Activated CD8-positive, alpha-beta T cell treated with anti-CD3 and anti-CD28 coated beads for 36 hours (primary cell): ENCODE measurements at regions of chr10 and their contacts with region 1.

Region 1: GRCh38 chr10:73159038-73159648 is 8.7 kb downstream of the ECD start:
- DNase-seq: peak; percentile 76
- ATAC-seq: no peak
- H3K4me3 Mint-ChIP-seq: no peak overlapping the region
- H3K27ac Mint-ChIP-seq: peak overlapping the region; percentile 63
- H3K4me1 Mint-ChIP-seq: peaks cover 38% of the 10 kb centered on the region
- H3K27me3 Mint-ChIP-seq: no peaks in the 10 kb centered on the region
- CTCF ChIP-seq: peak; percentile 94

Region 2: GRCh38 chr10:73076360-73077183 is 82.6 kb before region 1 on chr10:
- CTCF ChIA-PET with region 1: interaction called, 13 read pairs
- POLR2A ChIA-PET with region 1: interaction called, 3 read pairs
- intact Hi-C with region 1: no loop called
- DNase-seq: no peak
- ATAC-seq: no peak
- H3K4me3 Mint-ChIP-seq: no peak overlapping the region
- H3K27ac Mint-ChIP-seq: peak overlapping the region; percentile 46
- H3K4me1 Mint-ChIP-seq: peaks cover 16% of the 10 kb centered on the region
- H3K27me3 Mint-ChIP-seq: no peaks in the 10 kb centered on the region
- CTCF ChIP-seq: no peak

Region 3: DNA sequence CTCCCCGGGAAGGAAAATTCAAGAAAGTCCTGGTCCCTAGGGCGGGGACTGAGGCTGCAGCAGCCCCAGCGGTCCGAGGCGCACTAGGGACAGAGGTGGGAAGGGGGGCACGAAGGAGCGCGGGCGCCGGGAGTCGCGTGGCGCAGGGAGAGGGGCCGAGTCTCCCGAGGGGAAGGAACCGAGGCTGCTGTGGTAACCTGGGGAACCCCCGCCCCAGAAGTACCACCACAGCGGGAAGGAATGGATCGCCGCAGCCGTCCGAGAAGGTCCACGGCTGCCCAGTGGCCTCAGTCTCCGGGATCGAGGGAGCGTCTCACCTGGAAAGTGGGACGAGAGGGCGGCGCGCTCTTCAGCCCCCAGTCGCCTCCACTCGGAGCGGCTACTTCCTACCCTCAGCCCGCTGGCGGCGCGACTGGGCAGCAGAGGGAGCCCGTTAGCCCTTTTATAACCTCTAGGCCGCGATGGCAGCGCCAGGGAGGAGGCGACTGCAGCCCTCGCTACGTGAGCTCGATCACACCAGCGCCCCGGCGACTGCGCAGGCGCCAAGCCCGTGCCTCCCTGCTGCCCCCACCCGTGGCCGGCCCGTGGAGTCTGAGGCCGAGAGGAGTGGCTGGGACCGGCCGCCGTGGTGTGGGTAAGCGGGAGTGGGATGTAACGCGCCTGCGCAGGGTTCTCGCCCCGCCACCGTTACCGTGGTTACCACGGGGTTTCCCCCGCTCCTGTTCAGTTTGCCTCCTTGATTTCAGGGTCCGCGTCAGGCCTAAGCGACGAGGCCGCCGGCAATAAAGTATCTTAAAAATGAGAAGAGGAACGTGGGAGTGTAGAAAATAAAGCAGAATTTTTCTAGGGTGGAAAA is 62.5 kb before region 1 on chr10 and contains the start of gene P4HA1:
- CTCF ChIA-PET with region 1: interaction called, 60 read pairs
- POLR2A ChIA-PET with region 1: interaction called, 4 read pairs
- intact Hi-C with region 1: no loop called
- DNase-seq: peak; percentile 99
- ATAC-seq: peak; percentile 93
- H3K4me3 Mint-ChIP-seq: peak within 1 kb of the TSS; percentile 95
- H3K27ac Mint-ChIP-seq: peak within 1 kb of the TSS; percentile 98
- H3K4me1 Mint-ChIP-seq: peaks cover 31% of the 10 kb centered on the region
- H3K27me3 Mint-ChIP-seq: no peaks in the 10 kb centered on the region
- CTCF ChIP-seq: peak; percentile 62
- total RNA-seq, gene P4HA1: 72.2 to 72.3 TPM

Region 4: DNA sequence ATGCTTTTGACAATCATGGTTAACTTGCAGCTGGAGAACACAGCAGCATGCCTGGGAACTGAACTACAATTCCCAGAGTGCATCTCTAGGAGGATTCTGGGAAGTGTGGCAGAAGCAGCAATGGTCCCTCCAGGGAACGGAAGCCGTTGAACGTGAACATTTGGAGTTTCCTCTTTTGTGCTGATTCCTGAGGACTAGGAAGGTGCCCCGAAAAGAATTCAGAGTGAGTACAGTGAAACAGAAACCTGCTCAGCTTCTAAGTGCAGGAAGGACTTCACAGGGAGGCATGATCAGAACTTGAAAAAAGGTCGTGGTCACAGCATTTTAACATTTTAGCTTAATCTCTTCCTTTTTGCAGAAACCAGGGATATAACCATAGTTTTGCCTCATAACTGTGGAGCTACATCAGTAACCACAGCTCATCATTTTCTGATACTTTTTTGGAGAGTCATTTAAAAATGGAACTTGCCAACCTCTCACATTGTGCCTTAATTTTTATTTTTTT is 48.7 kb before region 1 on chr10 and contains the start of gene NUDT13:
- CTCF ChIA-PET with region 1: interaction called, 10 read pairs
- POLR2A ChIA-PET with region 1: interaction called, 3 read pairs
- intact Hi-C with region 1: no loop called
- DNase-seq: peak; percentile 55
- ATAC-seq: peak; percentile 86
- H3K4me3 Mint-ChIP-seq: peak within 1 kb of the TSS; percentile 89
- H3K27ac Mint-ChIP-seq: peak within 1 kb of the TSS; percentile 91
- H3K4me1 Mint-ChIP-seq: peaks cover 10% of the 10 kb centered on the region
- H3K27me3 Mint-ChIP-seq: no peaks in the 10 kb centered on the region
- CTCF ChIP-seq: no peak
- total RNA-seq, gene NUDT13: 2.3 to 2.4 TPM

Region 5: DNA sequence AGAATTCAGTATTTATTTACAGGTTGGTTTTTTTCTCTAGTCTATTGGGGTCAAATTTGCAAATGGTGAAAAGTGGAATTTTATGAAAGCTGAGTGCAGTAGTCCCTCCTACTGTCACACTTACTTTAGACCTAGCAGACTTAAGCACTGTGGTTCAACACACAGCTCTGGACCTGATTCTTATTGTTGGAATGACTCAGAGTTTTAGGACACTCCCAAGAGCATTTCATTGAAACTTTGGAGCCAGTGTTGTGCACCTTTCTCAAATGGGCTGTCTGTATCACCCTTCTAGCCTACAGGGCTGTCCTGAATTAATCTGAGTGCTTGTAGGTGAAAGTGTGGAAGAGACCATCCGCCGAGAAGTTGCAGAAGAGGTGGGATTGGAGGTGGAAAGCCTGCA is 32.8 kb before region 1 on chr10:
- CTCF ChIA-PET with region 1: interaction called, 10 read pairs
- POLR2A ChIA-PET with region 1: no interaction called
- intact Hi-C with region 1: no loop called
- DNase-seq: no peak
- ATAC-seq: no peak
- H3K4me3 Mint-ChIP-seq: no peak overlapping the region
- H3K27ac Mint-ChIP-seq: peak overlapping the region; percentile 43
- H3K4me1 Mint-ChIP-seq: no peaks in the 10 kb centered on the region
- H3K27me3 Mint-ChIP-seq: no peaks in the 10 kb centered on the region
- CTCF ChIP-seq: no peak

Region 6: DNA sequence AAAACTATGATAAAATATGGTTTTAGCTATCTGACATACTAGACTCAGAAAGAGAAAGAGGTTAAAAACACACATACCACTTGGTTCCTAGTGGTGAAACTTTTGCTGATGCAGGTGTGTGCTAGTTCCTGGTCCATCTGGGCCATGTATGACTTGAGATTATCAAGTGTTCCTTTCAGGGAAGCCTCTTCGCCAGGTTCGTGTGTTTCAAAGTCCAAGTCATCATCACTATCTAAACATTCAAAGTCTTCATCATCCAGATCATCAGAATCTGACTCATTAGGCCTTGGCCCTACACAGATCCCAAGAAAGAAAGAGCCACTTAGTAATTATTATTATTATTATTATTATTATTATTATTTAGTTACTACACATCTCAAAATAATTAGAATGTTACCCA is 22.5 kb before region 1 on chr10:
- CTCF ChIA-PET with region 1: interaction called, 39 read pairs
- POLR2A ChIA-PET with region 1: no interaction called
- intact Hi-C with region 1: no loop called
- DNase-seq: no peak
- ATAC-seq: no peak
- H3K4me3 Mint-ChIP-seq: no peak overlapping the region
- H3K27ac Mint-ChIP-seq: no peak overlapping the region
- H3K4me1 Mint-ChIP-seq: no peaks in the 10 kb centered on the region
- H3K27me3 Mint-ChIP-seq: no peaks in the 10 kb centered on the region
- CTCF ChIP-seq: no peak

Region 7: GRCh38 chr10:73433538-73433867 is 274.4 kb after region 1 on chr10 and contains the start of gene MSS51:
- CTCF ChIA-PET with region 1: no interaction called
- POLR2A ChIA-PET with region 1: no interaction called
- intact Hi-C with region 1: no loop called
- DNase-seq: no peak
- ATAC-seq: no peak
- H3K4me3 Mint-ChIP-seq: no peak within 1 kb of the TSS
- H3K27ac Mint-ChIP-seq: no peak within 1 kb of the TSS
- H3K4me1 Mint-ChIP-seq: peaks cover 12% of the 10 kb centered on the region
- H3K27me3 Mint-ChIP-seq: no peaks in the 10 kb centered on the region
- CTCF ChIP-seq: no peak
- total RNA-seq, gene MSS51: 2.0 to 2.3 TPM